CD8-positive, alpha-beta T cell (primary cell): ENCODE measurements at regions of chr14 and their contacts with region 1.

Region 1: GRCh38 chr14:100285021-100285912 is 21.0 kb downstream of the SLC25A29 start:
- DNase-seq: peak; percentile 64 to 88 (median 78)
- ATAC-seq: peak; percentile 91
- H3K4me3 ChIP-seq: peak overlapping the region; percentile 63 to 90
- H3K4me3 Mint-ChIP-seq: peak overlapping the region; percentile 81
- H3K27ac ChIP-seq: peak overlapping the region; percentile 72 to 76
- H3K27ac Mint-ChIP-seq: no peak overlapping the region
- H3K4me1 ChIP-seq: peaks cover 5% of the 10 kb centered on the region
- H3K4me1 Mint-ChIP-seq: peaks cover 11% of the 10 kb centered on the region
- H3K27me3 ChIP-seq: no peaks in the 10 kb centered on the region
- H3K27me3 Mint-ChIP-seq: no peaks in the 10 kb centered on the region
- CTCF ChIP-seq: peak; percentile 96

Region 2: GRCh38 chr14:99971087-99971940 is 314.0 kb before region 1 on chr14:
- CTCF ChIA-PET with region 1: no interaction called
- POLR2A ChIA-PET with region 1: no interaction called
- intact Hi-C with region 1: loop called in 1 of 2 experiments (anchors 10 kb)
- DNase-seq: peak; percentile 62 to 89 (median 78)
- ATAC-seq: peak; percentile 92
- H3K4me3 ChIP-seq: peak overlapping the region; percentile 35 to 67
- H3K4me3 Mint-ChIP-seq: peak overlapping the region; percentile 78
- H3K27ac ChIP-seq: no peak overlapping the region
- H3K27ac Mint-ChIP-seq: no peak overlapping the region
- H3K4me1 ChIP-seq: peaks cover 11% of the 10 kb centered on the region
- H3K4me1 Mint-ChIP-seq: peaks cover 12% of the 10 kb centered on the region
- H3K27me3 ChIP-seq: no peaks in the 10 kb centered on the region
- H3K27me3 Mint-ChIP-seq: peaks cover 5% of the 10 kb centered on the region
- CTCF ChIP-seq: no peak

Region 3: DNA sequence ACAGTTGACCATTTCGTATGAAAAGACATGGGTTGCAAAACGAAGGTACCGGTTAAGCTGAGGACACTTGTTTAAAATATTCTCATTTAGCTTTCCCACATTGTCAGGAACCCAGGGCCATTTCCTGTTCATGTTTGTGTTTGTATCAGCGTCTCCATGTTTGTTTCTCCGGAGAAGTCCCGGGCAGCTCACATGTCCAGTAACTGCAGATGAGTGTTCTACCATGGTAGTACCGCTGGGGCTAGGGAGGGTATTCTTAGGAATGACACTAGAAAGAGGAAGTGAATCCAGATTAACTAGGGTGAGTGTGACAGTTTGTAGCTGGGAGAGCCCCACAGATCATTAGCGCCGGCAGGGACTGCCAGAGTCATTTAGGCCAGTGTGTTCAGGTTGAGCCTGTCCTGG is 270.0 kb before region 1 on chr14:
- CTCF ChIA-PET with region 1: no interaction called
- POLR2A ChIA-PET with region 1: no interaction called
- intact Hi-C with region 1: no loop called
- DNase-seq: no peak
- ATAC-seq: no peak
- H3K4me3 ChIP-seq: no peak overlapping the region
- H3K4me3 Mint-ChIP-seq: no peak overlapping the region
- H3K27ac ChIP-seq: no peak overlapping the region
- H3K27ac Mint-ChIP-seq: no peak overlapping the region
- H3K4me1 ChIP-seq: no peaks in the 10 kb centered on the region
- H3K4me1 Mint-ChIP-seq: peaks cover 7% of the 10 kb centered on the region
- H3K27me3 ChIP-seq: no peaks in the 10 kb centered on the region
- H3K27me3 Mint-ChIP-seq: no peaks in the 10 kb centered on the region
- CTCF ChIP-seq: no peak

Region 4: DNA sequence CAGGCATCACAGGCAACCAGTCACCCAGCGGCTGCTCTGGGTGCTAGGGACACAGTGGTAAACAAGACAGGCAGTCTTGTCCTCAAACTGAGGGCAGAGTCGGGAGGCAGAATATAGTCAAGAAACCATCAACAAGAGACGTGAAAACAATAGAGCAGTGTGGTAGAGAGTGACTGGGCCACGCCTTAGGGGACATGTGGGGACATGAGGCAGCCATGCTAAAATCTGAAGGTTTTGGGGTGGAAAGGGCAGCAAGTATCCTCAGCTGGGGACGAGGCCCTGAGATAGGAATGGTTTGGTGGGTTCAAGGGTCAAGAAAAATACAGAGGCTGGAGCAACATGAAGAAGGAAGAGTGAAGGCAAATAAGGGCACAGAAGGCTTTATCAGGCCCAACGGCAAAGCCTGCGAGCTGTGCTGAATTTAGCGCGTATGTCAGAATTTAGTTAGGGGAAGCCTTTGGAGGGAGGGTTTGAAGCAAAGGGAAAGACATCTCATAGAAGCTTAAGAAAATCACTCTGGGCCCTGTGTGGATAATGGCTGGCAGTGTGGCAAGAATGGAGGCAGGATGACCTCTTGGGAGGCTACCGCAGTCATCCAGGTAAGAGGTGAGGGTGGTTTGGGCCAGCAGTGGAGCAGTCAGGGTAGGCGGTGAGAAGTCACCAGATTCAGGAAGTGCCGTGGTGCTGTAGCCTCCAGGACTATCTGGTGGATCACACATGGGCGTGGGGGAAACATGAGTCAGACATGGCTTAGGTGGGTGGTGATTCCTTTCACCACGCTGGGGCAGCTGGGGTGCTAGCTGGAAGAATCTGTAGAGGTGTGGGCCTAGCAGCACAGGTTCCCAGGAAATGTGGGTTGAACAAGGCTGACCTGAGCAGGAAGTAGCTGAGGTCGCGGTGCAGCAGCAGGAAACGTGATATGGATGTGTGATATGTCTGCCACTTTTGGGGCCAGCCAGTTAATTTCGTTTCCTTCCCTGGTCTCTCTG is 217.0 kb before region 1 on chr14:
- CTCF ChIA-PET with region 1: interaction called, 3 read pairs
- POLR2A ChIA-PET with region 1: no interaction called
- intact Hi-C with region 1: loop called in 1 of 2 experiments (anchors 5 kb)
- DNase-seq: peak; percentile 70 to 98 (median 88)
- ATAC-seq: peak; percentile 50
- H3K4me3 ChIP-seq: peak overlapping the region; percentile 73 to 85
- H3K4me3 Mint-ChIP-seq: peak overlapping the region; percentile 100
- H3K27ac ChIP-seq: peak overlapping the region; percentile 83 to 87
- H3K27ac Mint-ChIP-seq: peak overlapping the region; percentile 99
- H3K4me1 ChIP-seq: peaks cover 59% of the 10 kb centered on the region
- H3K4me1 Mint-ChIP-seq: peaks cover 82% of the 10 kb centered on the region
- H3K27me3 ChIP-seq: no peaks in the 10 kb centered on the region
- H3K27me3 Mint-ChIP-seq: no peaks in the 10 kb centered on the region
- CTCF ChIP-seq: no peak

Region 5: GRCh38 chr14:100213956-100214774 is 71.1 kb before region 1 on chr14:
- CTCF ChIA-PET with region 1: interaction called, 3 read pairs
- POLR2A ChIA-PET with region 1: interaction called, 3 read pairs
- intact Hi-C with region 1: loop called in 1 of 2 experiments (anchors 2 kb)
- DNase-seq: peak; percentile 78 to 95 (median 92)
- ATAC-seq: peak; percentile 97
- H3K4me3 ChIP-seq: peak overlapping the region; percentile 70 to 92
- H3K4me3 Mint-ChIP-seq: peak overlapping the region; percentile 80
- H3K27ac ChIP-seq: peak overlapping the region; percentile 88 to 90
- H3K27ac Mint-ChIP-seq: peak overlapping the region; percentile 90
- H3K4me1 ChIP-seq: peaks cover 33% of the 10 kb centered on the region
- H3K4me1 Mint-ChIP-seq: peaks cover 29% of the 10 kb centered on the region
- H3K27me3 ChIP-seq: no peaks in the 10 kb centered on the region
- H3K27me3 Mint-ChIP-seq: no peaks in the 10 kb centered on the region
- CTCF ChIP-seq: no peak

Region 6: GRCh38 chr14:100306420-100307219 is 21.4 kb after region 1 on chr14 and contains the start of gene SLC25A29:
- CTCF ChIA-PET with region 1: interaction called, 8 read pairs
- POLR2A ChIA-PET with region 1: interaction called, 3 read pairs
- intact Hi-C with region 1: loop called (anchors 1 kb)
- DNase-seq: peak; percentile 39 to 89 (median 76)
- ATAC-seq: peak; percentile 77
- H3K4me3 ChIP-seq: peak within 1 kb of the TSS; percentile 60 to 76
- H3K4me3 Mint-ChIP-seq: peak within 1 kb of the TSS; percentile 86
- H3K27ac ChIP-seq: no peak within 1 kb of the TSS
- H3K27ac Mint-ChIP-seq: peak within 1 kb of the TSS; percentile 60
- H3K4me1 ChIP-seq: peaks cover 18% of the 10 kb centered on the region
- H3K4me1 Mint-ChIP-seq: peaks cover 18% of the 10 kb centered on the region
- H3K27me3 ChIP-seq: no peaks in the 10 kb centered on the region
- H3K27me3 Mint-ChIP-seq: no peaks in the 10 kb centered on the region
- CTCF ChIP-seq: no peak
- total RNA-seq, gene SLC25A29: 19.4 to 22.8 TPM

Region 7: DNA sequence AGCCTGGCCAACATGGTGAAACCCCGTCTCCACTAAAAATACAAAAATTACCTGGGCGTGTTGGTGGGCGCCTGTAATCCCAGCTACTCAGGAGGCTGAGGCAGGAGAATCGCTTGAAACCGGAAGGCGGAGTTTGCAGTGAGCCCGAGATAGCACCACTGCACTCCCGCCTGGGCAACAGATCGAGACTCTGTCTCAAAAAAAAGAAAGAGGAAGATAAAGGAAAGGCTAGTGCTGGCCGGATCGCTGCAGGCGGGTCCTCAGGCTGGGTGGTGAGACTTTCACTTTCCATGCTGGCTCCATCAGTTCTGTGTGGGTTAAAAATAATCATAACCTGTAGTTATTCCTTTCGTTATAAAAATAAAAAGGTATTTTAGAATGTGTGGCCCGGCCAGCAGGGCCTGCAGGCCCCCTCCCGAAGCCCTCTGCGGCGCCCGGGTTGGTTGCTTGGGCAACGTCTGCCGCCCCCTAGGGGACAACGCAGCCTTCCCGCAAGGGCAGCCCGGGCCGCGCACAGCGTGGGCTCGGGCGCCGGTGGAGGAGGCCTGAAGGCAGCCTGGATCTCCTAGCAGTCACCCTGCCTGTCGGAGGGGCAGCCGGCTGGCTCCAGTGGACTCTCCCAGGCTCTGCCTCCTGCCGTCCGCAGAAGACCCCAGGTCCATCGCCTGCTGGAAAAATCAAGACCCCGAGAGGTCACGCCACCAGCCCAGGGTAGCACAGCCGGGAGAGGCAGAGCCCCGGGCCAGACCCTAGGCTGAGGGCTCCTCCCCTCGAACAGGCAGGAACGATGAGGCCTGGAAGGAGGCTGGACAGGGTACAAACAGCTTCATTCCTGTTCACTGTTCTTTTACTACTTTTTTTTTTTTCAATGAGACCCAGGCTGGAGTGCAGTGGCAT is 32.9 kb after region 1 on chr14:
- CTCF ChIA-PET with region 1: interaction called, 8 read pairs
- POLR2A ChIA-PET with region 1: no interaction called
- intact Hi-C with region 1: loop called (anchors 1 kb)
- DNase-seq: peak; percentile 43 to 87 (median 74)
- ATAC-seq: peak; percentile 99
- H3K4me3 ChIP-seq: peak overlapping the region; percentile 53 to 55
- H3K4me3 Mint-ChIP-seq: peak overlapping the region; percentile 76
- H3K27ac ChIP-seq: no peak overlapping the region
- H3K27ac Mint-ChIP-seq: no peak overlapping the region
- H3K4me1 ChIP-seq: peaks cover 8% of the 10 kb centered on the region
- H3K4me1 Mint-ChIP-seq: peaks cover 2% of the 10 kb centered on the region
- H3K27me3 ChIP-seq: no peaks in the 10 kb centered on the region
- H3K27me3 Mint-ChIP-seq: no peaks in the 10 kb centered on the region
- CTCF ChIP-seq: peak; percentile 75